Activated CD4-positive, alpha-beta memory T cell treated with anti-CD3 and anti-CD28 coated beads for 36 hours (primary cell): ENCODE measurements at regions of chr7 and their contacts with region 1.

Region 1: GRCh38 chr7:130182990-130183389 is 22.2 kb downstream of the TMEM209 start:
- DNase-seq: no peak
- H3K4me3 Mint-ChIP-seq: no peak overlapping the region
- H3K27ac Mint-ChIP-seq: peak overlapping the region; percentile 62
- H3K4me1 Mint-ChIP-seq: peaks cover 35% of the 10 kb centered on the region
- H3K27me3 Mint-ChIP-seq: no peaks in the 10 kb centered on the region

Region 2: GRCh38 chr7:129652914-129653313 is 530.1 kb before region 1 on chr7:
- CTCF ChIA-PET with region 1: no interaction called
- POLR2A ChIA-PET with region 1: no interaction called
- intact Hi-C with region 1: loop called (anchors 10 kb)
- DNase-seq: peak; percentile 25
- H3K4me3 Mint-ChIP-seq: no peak overlapping the region
- H3K27ac Mint-ChIP-seq: no peak overlapping the region
- H3K4me1 Mint-ChIP-seq: peaks cover 35% of the 10 kb centered on the region
- H3K27me3 Mint-ChIP-seq: no peaks in the 10 kb centered on the region

Region 3: DNA sequence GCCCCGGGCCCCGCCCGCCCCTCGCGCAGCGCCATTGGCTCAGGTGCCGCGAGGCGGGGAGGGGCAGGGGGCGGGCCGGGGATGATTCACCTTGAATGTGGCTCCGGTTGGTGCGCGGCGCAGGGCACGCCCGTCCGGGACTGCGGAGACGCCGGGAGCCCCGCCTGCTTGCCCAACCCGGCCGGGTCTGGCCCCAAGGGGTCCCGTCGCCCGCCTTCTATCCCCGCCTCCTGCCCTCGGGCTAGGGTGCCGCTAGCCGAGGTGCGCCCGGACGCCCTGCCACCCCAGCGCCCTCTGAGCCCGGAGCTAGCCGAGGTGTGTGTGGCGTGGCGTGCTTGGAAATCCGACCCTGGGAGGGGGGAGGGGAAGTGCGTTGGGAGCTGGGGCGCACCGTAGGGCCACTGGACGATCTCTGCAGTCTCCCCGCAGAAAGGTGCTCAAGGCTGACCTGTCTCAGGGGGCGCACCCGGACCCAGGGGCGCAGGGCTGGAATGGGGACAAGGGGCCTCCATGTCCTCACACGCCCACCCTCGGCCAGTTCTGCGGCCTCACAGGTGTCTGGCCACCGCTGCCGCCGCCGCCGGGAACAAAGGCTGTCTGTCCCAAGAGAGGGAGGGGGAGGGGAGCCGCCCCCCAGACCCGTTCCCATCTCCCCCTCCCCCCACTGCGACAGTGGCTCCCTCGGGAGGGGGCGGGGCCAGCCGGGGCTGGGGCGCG is 402.6 kb before region 1 on chr7:
- CTCF ChIA-PET with region 1: no interaction called
- POLR2A ChIA-PET with region 1: no interaction called
- intact Hi-C with region 1: no loop called
- DNase-seq: peak; percentile 88
- H3K4me3 Mint-ChIP-seq: peak overlapping the region; percentile 64
- H3K27ac Mint-ChIP-seq: no peak overlapping the region
- H3K4me1 Mint-ChIP-seq: peaks cover 29% of the 10 kb centered on the region
- H3K27me3 Mint-ChIP-seq: peaks cover 57% of the 10 kb centered on the region

Region 4: GRCh38 chr7:130090745-130091532 is 92.1 kb before region 1 on chr7:
- CTCF ChIA-PET with region 1: no interaction called
- POLR2A ChIA-PET with region 1: interaction called, 4 read pairs
- intact Hi-C with region 1: loop called (anchors 1 kb)
- DNase-seq: peak; percentile 52
- H3K4me3 Mint-ChIP-seq: no peak overlapping the region
- H3K27ac Mint-ChIP-seq: peak overlapping the region; percentile 45
- H3K4me1 Mint-ChIP-seq: peaks cover 29% of the 10 kb centered on the region
- H3K27me3 Mint-ChIP-seq: no peaks in the 10 kb centered on the region

Region 5: DNA sequence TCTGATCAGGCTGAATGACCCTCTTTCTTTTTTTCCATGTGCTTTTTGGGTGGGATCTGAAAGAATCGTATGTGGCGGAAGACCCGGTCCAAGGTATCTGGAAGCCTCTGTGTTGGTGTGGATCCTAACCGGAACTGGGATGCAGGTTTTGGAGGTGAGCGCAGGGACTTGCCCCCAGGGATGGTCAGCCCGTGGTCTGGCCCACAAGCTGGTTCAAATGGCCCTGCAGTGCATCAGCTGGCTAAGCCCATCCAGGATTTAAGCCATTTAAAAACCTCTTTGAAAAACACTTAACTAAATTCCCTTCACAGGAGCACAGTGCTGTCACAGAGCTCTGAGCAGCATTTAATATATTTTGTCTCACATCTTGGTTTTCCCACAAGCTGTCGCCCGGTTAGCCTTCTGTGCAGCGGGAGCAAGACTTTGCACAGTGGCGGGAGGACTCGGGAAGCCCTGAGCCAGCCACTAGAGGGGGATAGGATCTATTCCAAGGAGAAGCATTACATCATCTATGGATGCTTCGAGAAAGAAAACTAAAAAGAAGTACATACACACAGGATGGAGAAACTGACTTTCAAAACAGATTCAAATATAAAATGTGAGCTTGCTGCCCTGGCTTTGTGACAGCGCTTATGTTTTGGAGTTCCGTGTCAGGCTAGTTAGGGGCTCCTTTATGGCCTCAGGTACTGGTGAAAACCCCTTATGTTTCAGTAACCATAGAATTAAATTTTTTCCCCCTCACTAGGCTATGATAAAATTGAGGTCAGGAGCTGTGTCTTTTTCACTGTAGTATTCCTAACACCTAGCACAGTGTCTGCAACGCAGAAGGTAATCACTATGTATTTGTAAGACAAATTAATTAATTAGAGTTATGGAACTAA is 95.0 kb after region 1 on chr7:
- CTCF ChIA-PET with region 1: no interaction called
- POLR2A ChIA-PET with region 1: no interaction called
- intact Hi-C with region 1: loop called (anchors 1 kb)
- DNase-seq: no peak
- H3K4me3 Mint-ChIP-seq: no peak overlapping the region
- H3K27ac Mint-ChIP-seq: peak overlapping the region; percentile 83
- H3K4me1 Mint-ChIP-seq: peaks cover 31% of the 10 kb centered on the region
- H3K27me3 Mint-ChIP-seq: peaks cover 11% of the 10 kb centered on the region

Region 6: DNA sequence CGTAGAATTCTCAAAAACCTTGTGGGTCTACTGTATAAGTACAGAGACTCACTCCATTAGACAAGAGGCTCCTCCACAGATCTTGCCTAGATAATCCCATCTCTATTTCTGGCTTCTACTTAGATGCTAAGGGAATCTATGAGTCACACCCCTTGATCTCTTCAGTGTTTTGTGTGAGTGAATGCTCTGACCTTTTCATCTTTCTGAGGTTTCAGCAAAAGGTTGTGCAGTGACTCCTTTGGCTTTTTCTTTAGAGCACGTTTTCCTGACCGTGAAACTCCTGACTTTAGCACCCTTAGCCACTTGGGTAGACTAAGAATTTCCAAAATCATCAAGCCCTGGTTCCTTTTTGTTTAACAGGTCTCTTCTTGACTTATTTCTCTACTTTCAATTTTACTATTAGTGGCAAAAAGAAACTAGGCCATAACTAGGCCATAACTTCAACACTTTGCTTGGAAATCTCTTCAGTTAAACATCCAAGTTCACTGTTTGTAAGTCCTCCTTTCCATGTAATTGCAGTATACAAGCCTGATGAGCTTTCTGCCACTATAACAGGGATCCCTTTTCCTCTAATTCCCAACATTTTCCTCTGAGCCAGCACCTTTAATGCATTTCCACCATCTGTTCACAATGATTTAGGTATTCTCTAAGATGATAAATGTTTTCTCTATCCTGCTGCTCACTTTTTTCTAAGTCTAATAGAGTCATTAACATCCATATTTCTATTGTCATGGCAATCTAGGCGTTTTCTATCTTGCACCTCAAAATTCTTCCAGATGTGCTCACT is 466.2 kb after region 1 on chr7:
- CTCF ChIA-PET with region 1: no interaction called
- POLR2A ChIA-PET with region 1: no interaction called
- intact Hi-C with region 1: loop called (anchors 1 kb)
- DNase-seq: peak; percentile 42
- H3K4me3 Mint-ChIP-seq: peak overlapping the region; percentile 30
- H3K27ac Mint-ChIP-seq: peak overlapping the region; percentile 86
- H3K4me1 Mint-ChIP-seq: peaks cover 40% of the 10 kb centered on the region
- H3K27me3 Mint-ChIP-seq: no peaks in the 10 kb centered on the region